Activated naive CD8-positive, alpha-beta T cell treated with anti-CD3 and anti-CD28 coated beads, Interleukin-2, amount 10 ng/mL, durations not matched to agents 7 days and 5 days (primary cell): ENCODE measurements at regions of chr13 and their contacts with region 1.

Region 1: DNA sequence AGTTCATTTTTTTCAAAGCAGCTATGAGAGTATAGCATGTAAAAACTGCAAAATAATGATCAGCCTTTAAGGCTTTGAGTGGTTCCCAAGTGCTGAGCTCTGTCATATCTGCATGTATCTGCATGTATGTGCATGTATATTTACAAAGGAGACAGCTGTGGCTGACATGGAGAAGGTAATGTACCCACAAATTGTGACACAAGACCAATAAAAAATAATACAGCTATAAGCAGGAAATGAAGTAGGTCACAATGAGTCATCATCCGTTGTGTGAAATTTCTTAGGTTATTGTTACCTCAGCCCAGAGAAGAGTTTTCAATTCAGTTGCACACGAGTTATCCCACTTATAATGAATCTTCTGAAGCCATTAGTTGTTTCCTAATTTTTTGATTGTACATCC is 60.9 kb upstream of the MED4 start:
- DNase-seq: no peak
- ATAC-seq: peak; percentile 81
- H3K4me3 Mint-ChIP-seq: peak overlapping the region; percentile 55
- H3K27ac Mint-ChIP-seq: peak overlapping the region; percentile 93
- H3K4me1 Mint-ChIP-seq: peaks cover 69% of the 10 kb centered on the region
- H3K27me3 Mint-ChIP-seq: no peaks in the 10 kb centered on the region

Region 2: GRCh38 chr13:48184260-48184659 is 28.4 kb after region 1 on chr13:
- POLR2A ChIA-PET with region 1: interaction called, 24 read pairs
- DNase-seq: no peak
- ATAC-seq: no peak
- H3K4me3 Mint-ChIP-seq: peak overlapping the region; percentile 34
- H3K27ac Mint-ChIP-seq: peak overlapping the region; percentile 97
- H3K4me1 Mint-ChIP-seq: peaks cover 50% of the 10 kb centered on the region
- H3K27me3 Mint-ChIP-seq: no peaks in the 10 kb centered on the region

Region 3: GRCh38 chr13:48194379-48194754 is 38.5 kb after region 1 on chr13:
- POLR2A ChIA-PET with region 1: no interaction called
- DNase-seq: no peak
- ATAC-seq: no peak
- H3K4me3 Mint-ChIP-seq: no peak overlapping the region
- H3K27ac Mint-ChIP-seq: no peak overlapping the region
- H3K4me1 Mint-ChIP-seq: peaks cover 22% of the 10 kb centered on the region
- H3K27me3 Mint-ChIP-seq: no peaks in the 10 kb centered on the region

Region 4: DNA sequence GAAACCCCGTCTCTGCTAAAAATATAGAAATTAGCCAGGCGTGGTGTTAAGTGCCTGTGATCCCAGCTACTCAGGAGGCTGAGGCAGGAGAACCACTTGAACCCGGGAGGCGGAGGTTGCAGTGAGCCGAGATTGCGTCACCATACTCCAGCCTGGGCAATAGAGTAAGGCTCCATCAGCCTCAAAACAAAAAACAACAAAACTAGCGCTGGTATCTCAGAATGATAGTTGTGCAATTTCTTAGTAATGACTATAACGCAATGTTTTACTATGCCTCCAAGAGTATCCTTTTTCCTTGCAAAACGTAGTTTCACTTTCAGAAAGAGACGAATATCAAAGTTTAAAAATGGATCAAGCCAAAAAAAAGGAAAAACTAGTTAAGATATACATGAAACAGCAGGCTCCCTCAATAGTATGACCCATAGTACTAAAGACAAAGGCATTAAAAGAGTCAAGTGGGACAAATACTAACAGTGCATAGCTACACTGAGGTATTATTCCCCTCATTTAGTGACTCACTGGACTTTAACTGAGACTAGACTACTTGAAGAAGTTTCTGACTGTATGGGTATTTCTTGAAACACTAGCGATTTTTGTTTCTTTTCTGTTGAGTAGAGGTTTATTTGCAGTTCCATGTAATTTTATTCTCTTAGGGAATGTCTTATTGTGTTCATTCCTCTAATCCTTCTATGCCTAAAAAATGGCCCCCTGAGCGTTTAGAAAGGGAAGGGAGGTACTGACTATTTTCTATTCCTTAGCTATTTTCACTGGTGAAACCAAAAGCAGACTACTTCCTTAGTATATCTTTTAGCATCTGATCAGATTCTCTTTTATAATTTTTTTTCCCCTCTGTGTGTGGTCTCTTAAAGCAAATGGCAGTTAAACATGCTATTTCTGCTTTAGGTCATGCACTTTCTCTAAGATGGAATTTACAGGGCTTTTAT is 66.8 kb after region 1 on chr13:
- POLR2A ChIA-PET with region 1: interaction called, 12 read pairs
- DNase-seq: no peak
- ATAC-seq: no peak
- H3K4me3 Mint-ChIP-seq: peak overlapping the region; percentile 78
- H3K27ac Mint-ChIP-seq: peak overlapping the region; percentile 90
- H3K4me1 Mint-ChIP-seq: peaks cover 31% of the 10 kb centered on the region
- H3K27me3 Mint-ChIP-seq: no peaks in the 10 kb centered on the region